HepG2 (cell line): ENCODE measurements at regions of chr19 and their contacts with region 1.

Region 1: GRCh38 chr19:38929929-38930775 is at the start of gene SARS2:
- DNase-seq: peak; percentile 89
- ATAC-seq: peak; percentile 46
- H3K4me3 ChIP-seq: peak within 1 kb of the TSS; percentile 77 to 84 (median 81)
- H3K27ac ChIP-seq: peak within 1 kb of the TSS; percentile 91
- H3K4me1 ChIP-seq: peaks cover 50% of the 10 kb centered on the region
- H3K27me3 ChIP-seq: no peaks in the 10 kb centered on the region
- CTCF ChIP-seq: peak; percentile 99
- EP300 ChIP-seq: 0 out of 4 replicates have a peak, but pooled peaks of 1 of the 2 experiments have one; percentile 39
- POLR2A ChIP-seq: peak in 1 of 2 experiments; percentile 97; a peak in 3 of 4 replicates
- RAD21 ChIP-seq: peak; percentile 84
- total RNA-seq, gene SARS2: 30.1 and 48.6 TPM in 2 replicates

Region 2: GRCh38 chr19:38618590-38619360 is 311.4 kb before region 1 on chr19 and contains the start of gene EIF3K:
- CTCF ChIA-PET with region 1: no interaction called
- POLR2A ChIA-PET with region 1: interaction called, 11 read pairs
- in situ Hi-C with region 1: no loop called
- intact Hi-C with region 1: no loop called
- DNase-seq: peak; percentile 97
- ATAC-seq: peak; percentile 91
- H3K4me3 ChIP-seq: peak within 1 kb of the TSS; percentile 92 to 95 (median 94)
- H3K27ac ChIP-seq: peak within 1 kb of the TSS; percentile 66
- H3K4me1 ChIP-seq: peaks cover 36% of the 10 kb centered on the region
- H3K27me3 ChIP-seq: no peaks in the 10 kb centered on the region; a peak in 2 of 5 replicates
- CTCF ChIP-seq: no peak
- EP300 ChIP-seq: no peak
- POLR2A ChIP-seq: peak; percentile 76 to 88
- RAD21 ChIP-seq: no peak
- total RNA-seq, gene EIF3K: 258 and 351 TPM in 2 replicates

Region 3: GRCh38 chr19:38729653-38730469 is 200.3 kb before region 1 on chr19:
- CTCF ChIA-PET with region 1: no interaction called
- POLR2A ChIA-PET with region 1: no interaction called
- in situ Hi-C with region 1: no loop called
- intact Hi-C with region 1: loop called (anchors 5 kb)
- DNase-seq: peak; percentile 57
- ATAC-seq: peak; percentile 72
- H3K4me3 ChIP-seq: no peak overlapping the region
- H3K27ac ChIP-seq: no peak overlapping the region
- H3K4me1 ChIP-seq: peaks cover 16% of the 10 kb centered on the region
- H3K27me3 ChIP-seq: no peaks in the 10 kb centered on the region
- CTCF ChIP-seq: peak; percentile 96
- EP300 ChIP-seq: no peak
- POLR2A ChIP-seq: 0 out of 4 replicates have a peak, but pooled peaks of 1 of the 2 experiments have one; percentile 26
- RAD21 ChIP-seq: peak; percentile 82

Region 4: DNA sequence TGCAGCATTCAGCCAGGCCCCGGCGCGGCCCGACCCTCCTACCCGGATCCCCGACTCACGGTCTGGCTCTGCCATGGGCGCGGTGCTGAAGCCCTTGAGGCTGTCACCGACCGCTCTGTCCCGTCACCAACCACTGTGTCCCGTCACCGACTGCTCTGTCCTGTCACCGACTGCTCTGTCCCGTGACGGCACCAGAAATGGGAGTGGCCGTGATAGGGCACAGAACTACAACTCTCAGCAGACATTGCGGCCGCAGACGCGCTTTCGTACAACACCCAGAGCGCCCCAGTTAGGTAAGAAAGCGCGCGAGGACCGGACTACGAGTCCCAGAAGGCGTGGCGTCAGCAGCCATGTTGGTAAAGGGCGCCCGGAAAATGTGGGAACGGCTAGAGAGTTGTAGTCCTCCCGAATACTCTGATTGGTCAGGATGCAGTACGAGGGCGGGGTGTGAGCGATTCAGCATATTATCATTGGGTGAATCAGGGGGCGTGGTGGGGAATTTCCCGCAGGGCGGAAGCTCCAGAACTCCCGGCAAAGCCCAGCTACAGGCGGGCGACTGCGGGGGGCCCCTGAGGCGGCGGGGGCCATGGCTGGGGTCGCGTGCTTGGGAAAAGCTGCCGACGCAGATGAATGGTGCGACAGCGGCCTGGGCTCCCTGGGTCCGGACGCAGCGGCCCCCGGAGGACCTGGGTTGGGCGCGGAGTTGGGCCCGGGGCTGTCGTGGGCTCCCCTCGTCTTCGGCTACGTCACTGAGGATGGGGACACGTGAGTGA is 30.5 kb before region 1 on chr19 and contains the starts of genes NFKBIB and SIRT2:
- CTCF ChIA-PET with region 1: no interaction called
- POLR2A ChIA-PET with region 1: interaction called, 24 read pairs
- in situ Hi-C with region 1: no loop called
- intact Hi-C with region 1: no loop called
- DNase-seq: peak; percentile 99
- ATAC-seq: peak; percentile 95
- H3K4me3 ChIP-seq: peak within 1 kb of the TSS; percentile 73 to 87 (median 83)
- H3K27ac ChIP-seq: peak within 1 kb of the TSS; percentile 73
- H3K4me1 ChIP-seq: peaks cover 34% of the 10 kb centered on the region
- H3K27me3 ChIP-seq: no peaks in the 10 kb centered on the region; a peak in 1 of 5 replicates
- CTCF ChIP-seq: peak; percentile 42
- EP300 ChIP-seq: peak in 1 of 2 experiments; percentile 4; a peak in 1 of 4 replicates
- POLR2A ChIP-seq: peak in 1 of 2 experiments; percentile 59; a peak in 2 of 4 replicates
- RAD21 ChIP-seq: peak; percentile 15; the same call in 1 of the 2 replicates
- total RNA-seq, gene NFKBIB: 13.8 and 14.9 TPM in 2 replicates
- total RNA-seq, gene SIRT2: 20.3 and 22.3 TPM in 2 replicates

Region 5: GRCh38 chr19:38975214-38975860 is 45.2 kb after region 1 on chr19 and contains the start of gene FBXO17:
- CTCF ChIA-PET with region 1: no interaction called
- POLR2A ChIA-PET with region 1: interaction called, 12 read pairs
- in situ Hi-C with region 1: no loop called
- intact Hi-C with region 1: no loop called
- DNase-seq: peak; percentile 47
- ATAC-seq: peak; percentile 74
- H3K4me3 ChIP-seq: peak within 1 kb of the TSS; percentile 67 to 81 (median 80)
- H3K27ac ChIP-seq: peak within 1 kb of the TSS; percentile 99
- H3K4me1 ChIP-seq: peaks cover 57% of the 10 kb centered on the region
- H3K27me3 ChIP-seq: no peaks in the 10 kb centered on the region
- CTCF ChIP-seq: no peak
- EP300 ChIP-seq: no peak
- POLR2A ChIP-seq: peak; percentile 28 to 41; a peak in 3 of 4 replicates
- RAD21 ChIP-seq: no peak
- total RNA-seq, gene FBXO17: 17.9 and 22.1 TPM in 2 replicates